MCF 10A (cell line): ENCODE measurements at regions of chr5 and their contacts with region 1.

Region 1: DNA sequence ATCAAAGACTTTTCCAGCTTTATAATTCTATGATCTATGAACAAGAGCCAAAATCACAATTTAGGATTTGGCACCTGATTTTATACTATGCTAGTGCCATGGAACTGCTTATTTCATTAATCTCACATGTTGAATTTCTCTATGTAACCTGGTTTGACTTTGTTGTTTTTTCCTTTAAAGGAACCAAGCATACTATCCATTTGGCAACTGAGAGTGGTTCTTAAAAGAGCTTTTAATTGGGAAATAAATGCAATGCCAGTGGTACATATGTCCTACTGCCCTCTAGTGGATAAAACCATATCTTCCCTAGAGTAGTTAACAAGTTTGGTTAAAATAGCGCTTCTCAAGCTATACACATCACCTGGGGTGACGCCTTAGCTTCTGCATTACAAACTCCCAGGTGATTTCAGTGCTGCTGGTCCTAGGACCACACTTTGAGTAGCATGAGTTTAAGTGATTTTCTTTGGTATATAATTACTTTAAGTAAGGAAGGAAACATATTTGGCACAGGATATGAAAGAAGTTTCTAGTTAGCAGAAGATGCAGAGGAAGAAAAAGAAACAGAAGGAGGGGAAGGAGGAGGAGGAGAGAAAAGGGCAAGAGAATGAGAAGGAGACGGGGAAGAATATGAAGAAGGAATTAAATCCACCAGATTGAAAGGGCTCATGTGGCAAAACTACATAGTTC is 56.8 kb downstream of the FGF10 start:
- DNase-seq: peak; percentile 66
- H3K4me3 Mint-ChIP-seq: no peak overlapping the region
- H3K27ac Mint-ChIP-seq: peak overlapping the region; percentile 21
- H3K4me1 Mint-ChIP-seq: no peaks in the 10 kb centered on the region
- H3K27me3 Mint-ChIP-seq: no peaks in the 10 kb centered on the region
- CTCF ChIP-seq: peak; percentile 67

Region 2: DNA sequence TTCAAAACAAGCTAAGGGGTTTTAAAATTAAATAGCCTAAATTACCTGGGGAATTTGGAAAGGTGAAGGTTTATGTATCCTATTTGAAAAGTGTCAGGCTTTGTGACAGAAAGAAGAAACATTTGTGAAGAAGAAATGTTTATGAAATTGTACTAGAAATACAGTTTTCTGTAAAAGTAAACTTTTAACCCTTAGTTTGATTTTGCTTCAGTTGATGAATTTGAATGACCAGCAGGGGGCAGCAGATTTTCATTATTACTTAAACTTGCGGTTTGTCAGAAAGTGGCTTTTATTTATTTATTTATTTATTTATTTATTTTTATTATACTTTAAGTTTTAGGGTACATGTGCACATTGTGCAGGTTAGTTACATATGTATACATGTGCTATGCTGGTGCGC is 671.3 kb before region 1 on chr5:
- CTCF ChIA-PET with region 1: no interaction called
- POLR2A ChIA-PET with region 1: no interaction called
- intact Hi-C with region 1: loop called (anchors 2 kb)
- DNase-seq: peak; percentile 61
- H3K4me3 Mint-ChIP-seq: no peak overlapping the region
- H3K27ac Mint-ChIP-seq: no peak overlapping the region
- H3K4me1 Mint-ChIP-seq: no peaks in the 10 kb centered on the region
- H3K27me3 Mint-ChIP-seq: no peaks in the 10 kb centered on the region
- CTCF ChIP-seq: peak; percentile 48

Region 3: DNA sequence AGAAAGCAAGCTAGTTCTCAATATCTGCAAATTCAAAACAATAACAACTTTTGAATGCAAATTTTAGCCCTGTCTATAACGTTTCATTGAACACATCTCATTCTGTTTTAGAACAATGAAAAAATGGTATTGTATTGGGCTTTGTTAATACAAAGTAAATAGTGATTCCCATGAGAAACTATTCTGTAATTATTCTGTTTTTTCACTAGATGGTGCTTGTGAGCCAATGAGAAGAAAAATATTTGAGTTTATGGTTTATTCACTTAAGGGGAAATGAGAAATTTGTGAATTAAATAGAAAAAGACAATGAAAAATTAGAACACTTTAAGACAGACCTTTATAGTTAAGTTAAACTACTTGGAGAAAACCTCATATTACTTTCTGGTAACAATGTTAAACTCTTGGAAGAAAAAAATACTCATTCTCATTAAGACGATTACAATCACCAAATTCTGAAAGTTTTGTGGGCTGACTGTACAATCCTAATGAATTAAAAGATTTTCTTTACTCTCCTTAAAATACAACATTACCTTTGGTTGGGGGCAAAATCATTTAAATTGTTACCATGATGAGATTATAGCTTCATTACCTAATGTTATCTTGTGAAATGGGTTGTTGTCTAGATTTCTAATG is 602.5 kb before region 1 on chr5:
- CTCF ChIA-PET with region 1: interaction called, 172 read pairs
- POLR2A ChIA-PET with region 1: interaction called, 6 read pairs
- intact Hi-C with region 1: loop called (anchors 1 kb)
- DNase-seq: peak; percentile 46
- H3K4me3 Mint-ChIP-seq: no peak overlapping the region
- H3K27ac Mint-ChIP-seq: no peak overlapping the region
- H3K4me1 Mint-ChIP-seq: peaks cover 7% of the 10 kb centered on the region
- H3K27me3 Mint-ChIP-seq: no peaks in the 10 kb centered on the region
- CTCF ChIP-seq: peak; percentile 59

Region 4: DNA sequence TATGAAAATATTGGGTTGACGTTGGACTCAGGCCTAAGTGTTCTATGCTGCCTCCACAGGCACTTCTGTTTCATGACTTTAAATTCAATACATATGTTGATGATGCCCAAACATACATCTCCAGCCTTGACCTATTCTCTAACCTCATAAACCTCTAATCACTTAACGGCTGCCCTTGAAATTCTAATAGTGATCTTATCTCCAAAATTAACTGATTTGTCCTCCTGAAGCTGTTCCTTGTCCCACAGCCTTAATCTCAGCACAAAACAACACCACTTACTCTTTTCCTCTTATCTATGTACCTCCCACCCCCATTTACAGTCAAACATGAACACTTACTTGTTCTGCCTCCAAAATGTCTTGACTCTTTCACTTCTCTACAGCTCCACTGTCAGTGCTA is 13.4 kb after region 1 on chr5:
- CTCF ChIA-PET with region 1: interaction called, 14 read pairs
- POLR2A ChIA-PET with region 1: no interaction called
- intact Hi-C with region 1: no loop called
- DNase-seq: no peak
- H3K4me3 Mint-ChIP-seq: no peak overlapping the region
- H3K27ac Mint-ChIP-seq: no peak overlapping the region
- H3K4me1 Mint-ChIP-seq: no peaks in the 10 kb centered on the region
- H3K27me3 Mint-ChIP-seq: no peaks in the 10 kb centered on the region
- CTCF ChIP-seq: no peak

Region 5: GRCh38 chr5:45847877-45848276 is 1515.4 kb after region 1 on chr5:
- CTCF ChIA-PET with region 1: no interaction called
- POLR2A ChIA-PET with region 1: no interaction called
- intact Hi-C with region 1: no loop called
- DNase-seq: no peak
- H3K4me3 Mint-ChIP-seq: no peak overlapping the region
- H3K27ac Mint-ChIP-seq: no peak overlapping the region
- H3K4me1 Mint-ChIP-seq: no peaks in the 10 kb centered on the region
- H3K27me3 Mint-ChIP-seq: no peaks in the 10 kb centered on the region
- CTCF ChIP-seq: no peak